ENCODE measurements at regions of chr6 and their contacts with region 1.

Region 1: GRCh38 chr6:139028658-139029469 is at the start of gene ABRACL:
- DNase-seq: peak; percentile 76
- H3K4me3 ChIP-seq: peak within 1 kb of the TSS; percentile 74
- H3K27ac ChIP-seq: peak within 1 kb of the TSS; percentile 62
- H3K4me1 ChIP-seq: peaks cover 22% of the 10 kb centered on the region
- CTCF ChIP-seq: no peak
- total RNA-seq, gene ABRACL: 69.7 and 70.1 TPM in 2 replicates

Region 2: GRCh38 chr6:138240476-138241245 is 788.2 kb before region 1 on chr6:
- CTCF ChIA-PET with region 1: no interaction called
- POLR2A ChIA-PET with region 1: no interaction called
- intact Hi-C with region 1: no loop called
- DNase-seq: no peak
- H3K4me3 ChIP-seq: no peak overlapping the region
- H3K27ac ChIP-seq: no peak overlapping the region
- H3K4me1 ChIP-seq: no peaks in the 10 kb centered on the region
- CTCF ChIP-seq: no peak

Region 3: DNA sequence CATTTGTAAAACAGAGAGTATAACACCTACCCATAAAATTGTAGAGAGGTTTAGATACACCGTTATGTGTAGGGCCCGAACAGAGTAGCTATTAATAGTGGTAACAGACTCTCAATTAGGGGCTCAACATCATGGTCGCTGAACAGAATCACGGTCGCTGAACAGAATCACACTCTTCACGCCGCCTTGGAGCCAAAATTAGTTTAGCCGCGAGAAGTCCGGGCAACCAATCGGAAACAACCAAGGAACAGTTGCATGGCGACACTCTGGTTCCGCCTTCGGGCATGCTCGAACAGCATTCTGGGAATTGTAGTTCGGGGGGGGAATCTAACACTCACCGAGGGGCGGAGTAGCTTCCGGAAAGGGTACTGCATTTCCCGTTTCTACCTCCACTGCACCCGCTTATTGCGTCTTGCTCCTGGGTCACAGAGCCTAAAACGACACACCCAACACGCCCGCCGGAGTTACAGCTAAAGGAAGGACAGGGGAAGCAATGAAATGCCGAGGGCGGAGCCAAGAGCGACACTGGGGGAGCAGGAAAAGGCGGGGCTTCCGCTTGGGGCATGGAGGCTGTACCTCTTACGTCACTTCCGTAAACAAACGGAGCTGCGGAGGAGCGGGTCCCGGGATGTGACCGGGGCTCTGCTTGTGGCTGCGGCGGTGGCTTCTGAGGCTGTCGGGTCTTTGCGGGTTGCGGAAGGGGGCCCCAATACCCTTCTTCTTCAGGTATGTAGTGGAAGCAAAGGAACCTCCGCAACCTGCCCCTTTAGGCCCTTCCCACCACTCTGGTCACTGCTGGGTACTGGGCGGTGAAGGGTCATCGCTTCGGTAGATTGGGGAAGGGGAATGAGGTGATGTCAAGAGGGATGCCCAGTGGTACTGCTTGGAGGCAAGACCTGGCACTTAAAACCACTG is 255.4 kb before region 1 on chr6 and contains the start of gene CCDC28A:
- CTCF ChIA-PET with region 1: no interaction called
- POLR2A ChIA-PET with region 1: no interaction called
- intact Hi-C with region 1: loop called (anchors 1 kb)
- DNase-seq: peak; percentile 98
- H3K4me3 ChIP-seq: peak within 1 kb of the TSS; percentile 99
- H3K27ac ChIP-seq: peak within 1 kb of the TSS; percentile 83
- H3K4me1 ChIP-seq: peaks cover 20% of the 10 kb centered on the region
- CTCF ChIP-seq: no peak
- total RNA-seq, gene CCDC28A: 11.0 and 13.5 TPM in 2 replicates

Region 4: GRCh38 chr6:139016337-139017213 is 12.3 kb before region 1 on chr6:
- CTCF ChIA-PET with region 1: interaction called, 3 read pairs
- POLR2A ChIA-PET with region 1: interaction called, 17 read pairs
- intact Hi-C with region 1: loop called (anchors 1 kb)
- DNase-seq: peak; percentile 88
- H3K4me3 ChIP-seq: peak overlapping the region; percentile 55
- H3K27ac ChIP-seq: peak overlapping the region; percentile 46
- H3K4me1 ChIP-seq: peaks cover 29% of the 10 kb centered on the region
- CTCF ChIP-seq: no peak; the same call in 1 of the 2 replicates

Region 5: GRCh38 chr6:139124887-139125672 is 96.2 kb after region 1 on chr6:
- CTCF ChIA-PET with region 1: no interaction called
- POLR2A ChIA-PET with region 1: no interaction called
- intact Hi-C with region 1: loop called (anchors 5 kb)
- DNase-seq: peak; percentile 92
- H3K4me3 ChIP-seq: peak overlapping the region; percentile 19
- H3K27ac ChIP-seq: peak overlapping the region; percentile 21
- H3K4me1 ChIP-seq: peaks cover 21% of the 10 kb centered on the region
- CTCF ChIP-seq: peak; percentile 98

Region 6: GRCh38 chr6:139375232-139376016 is 346.6 kb after region 1 on chr6:
- CTCF ChIA-PET with region 1: no interaction called
- POLR2A ChIA-PET with region 1: interaction called, 3 read pairs
- intact Hi-C with region 1: loop called (anchors 2 kb)
- DNase-seq: peak; percentile 95
- H3K4me3 ChIP-seq: peak overlapping the region; percentile 92
- H3K27ac ChIP-seq: peak overlapping the region; percentile 92
- H3K4me1 ChIP-seq: peaks cover 23% of the 10 kb centered on the region
- CTCF ChIP-seq: no peak

Measured in OCI-LY7 (cell line).